MCF 10A (cell line): ENCODE measurements at regions of chr4 and their contacts with region 1.

Region 1: DNA sequence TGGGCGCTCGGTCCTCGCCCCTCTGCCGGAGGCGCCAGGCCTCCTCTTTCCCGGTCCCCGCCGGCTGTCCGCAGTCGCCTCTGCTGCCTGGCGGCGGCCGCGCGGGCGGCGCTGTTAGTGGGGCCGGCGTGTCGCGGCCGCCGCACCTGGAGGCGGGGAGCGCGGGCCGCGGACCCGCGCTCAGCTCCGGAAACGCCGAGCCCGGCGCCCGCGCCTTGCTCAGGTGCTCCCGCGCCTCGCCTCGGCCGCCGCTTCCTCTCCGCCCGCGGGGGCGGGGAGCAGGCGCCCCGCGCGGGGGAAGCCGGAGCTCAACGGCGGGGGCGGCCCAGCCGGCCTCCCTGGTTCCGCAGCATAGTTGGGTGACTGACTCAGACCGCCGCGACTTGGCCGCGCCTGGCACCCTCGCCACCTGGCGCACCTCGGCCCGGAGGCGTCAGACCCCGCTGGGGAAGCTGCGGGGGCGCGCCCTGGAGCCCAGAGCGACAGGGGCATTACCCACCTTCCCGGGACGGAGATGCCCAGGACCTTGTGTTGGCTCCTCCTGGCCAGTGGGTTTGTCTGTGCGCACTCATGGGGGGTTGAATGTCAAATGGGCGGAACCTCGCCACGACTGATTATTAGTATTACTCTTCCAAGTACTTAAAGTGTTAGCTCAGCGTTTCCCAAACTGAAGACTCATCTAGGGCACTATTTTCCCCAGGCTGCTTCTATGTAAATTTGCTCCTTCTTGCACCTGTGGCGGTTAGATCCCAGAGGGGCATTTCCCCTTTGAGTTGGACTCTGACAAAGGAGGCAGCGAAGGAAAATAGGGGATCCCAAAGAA is at the start of gene ARAP2:
- DNase-seq: peak; percentile 62
- H3K4me3 Mint-ChIP-seq: peak within 1 kb of the TSS; percentile 90
- H3K27ac Mint-ChIP-seq: peak within 1 kb of the TSS; percentile 92
- H3K4me1 Mint-ChIP-seq: peaks cover 16% of the 10 kb centered on the region
- H3K27me3 Mint-ChIP-seq: no peaks in the 10 kb centered on the region
- CTCF ChIP-seq: no peak
- total RNA-seq, gene ARAP2: 10.9 and 12.0 TPM in 2 replicates

Region 2: GRCh38 chr4:35365186-35365585 is 879.3 kb before region 1 on chr4:
- CTCF ChIA-PET with region 1: no interaction called
- POLR2A ChIA-PET with region 1: no interaction called
- intact Hi-C with region 1: no loop called
- DNase-seq: no peak
- H3K4me3 Mint-ChIP-seq: no peak overlapping the region
- H3K27ac Mint-ChIP-seq: no peak overlapping the region
- H3K4me1 Mint-ChIP-seq: no peaks in the 10 kb centered on the region
- H3K27me3 Mint-ChIP-seq: no peaks in the 10 kb centered on the region
- CTCF ChIP-seq: no peak

Region 3: GRCh38 chr4:36224972-36225903 is 19.2 kb before region 1 on chr4:
- CTCF ChIA-PET with region 1: interaction called, 4 read pairs
- POLR2A ChIA-PET with region 1: interaction called, 68 read pairs
- intact Hi-C with region 1: no loop called
- DNase-seq: no peak
- H3K4me3 Mint-ChIP-seq: no peak overlapping the region
- H3K27ac Mint-ChIP-seq: no peak overlapping the region
- H3K4me1 Mint-ChIP-seq: peaks cover 15% of the 10 kb centered on the region
- H3K27me3 Mint-ChIP-seq: no peaks in the 10 kb centered on the region
- CTCF ChIP-seq: no peak

Region 4: DNA sequence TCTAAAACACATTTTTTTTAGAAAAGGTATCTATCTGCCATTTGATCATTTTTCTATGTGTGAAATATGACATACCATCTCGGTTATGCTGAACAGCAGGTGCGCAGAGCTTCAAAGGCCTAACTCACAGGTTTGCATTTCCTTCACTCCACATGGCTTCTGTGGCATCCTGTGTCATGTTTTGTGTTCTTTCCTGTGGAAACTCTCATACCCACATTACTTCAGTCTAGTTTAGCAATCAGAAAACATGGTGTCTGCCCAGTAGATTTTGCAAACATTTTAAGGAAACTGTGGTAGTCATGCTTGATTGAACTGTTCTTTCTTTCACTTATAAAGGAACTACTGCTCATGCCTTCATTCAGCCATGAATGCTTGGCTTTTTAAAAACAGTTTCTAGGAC is 11.1 kb after region 1 on chr4:
- CTCF ChIA-PET with region 1: interaction called, 4 read pairs
- POLR2A ChIA-PET with region 1: interaction called, 13 read pairs
- intact Hi-C with region 1: no loop called
- DNase-seq: no peak
- H3K4me3 Mint-ChIP-seq: no peak overlapping the region
- H3K27ac Mint-ChIP-seq: no peak overlapping the region
- H3K4me1 Mint-ChIP-seq: no peaks in the 10 kb centered on the region
- H3K27me3 Mint-ChIP-seq: no peaks in the 10 kb centered on the region
- CTCF ChIP-seq: no peak

Region 5: DNA sequence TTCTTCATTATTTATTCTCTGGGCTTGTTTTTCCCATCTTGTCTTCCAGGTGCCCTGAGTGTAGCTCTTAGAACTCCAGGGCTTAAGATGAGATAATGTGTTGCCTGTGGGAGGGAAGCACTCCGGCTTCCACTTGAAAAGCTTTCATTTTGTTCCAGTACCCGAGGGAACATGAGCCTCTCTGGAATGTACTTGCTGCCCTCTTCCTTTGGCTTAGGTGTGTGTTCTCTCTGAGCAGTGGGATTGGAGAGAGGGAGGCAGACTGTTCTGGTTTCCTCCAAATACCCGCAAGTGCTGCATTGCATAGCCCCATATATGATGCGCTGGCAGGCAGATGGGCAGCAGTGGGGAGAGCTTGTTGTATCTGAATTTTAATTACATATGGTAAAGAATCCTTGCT is 36.1 kb after region 1 on chr4:
- CTCF ChIA-PET with region 1: interaction called, 18 read pairs
- POLR2A ChIA-PET with region 1: interaction called, 38 read pairs
- intact Hi-C with region 1: no loop called
- DNase-seq: peak; percentile 32
- H3K4me3 Mint-ChIP-seq: peak overlapping the region; percentile 45
- H3K27ac Mint-ChIP-seq: peak overlapping the region; percentile 54
- H3K4me1 Mint-ChIP-seq: peaks cover 36% of the 10 kb centered on the region
- H3K27me3 Mint-ChIP-seq: no peaks in the 10 kb centered on the region
- CTCF ChIP-seq: no peak

Region 6: GRCh38 chr4:36292556-36293188 is 48.2 kb after region 1 on chr4:
- CTCF ChIA-PET with region 1: interaction called, 3 read pairs
- POLR2A ChIA-PET with region 1: interaction called, 23 read pairs
- intact Hi-C with region 1: loop called (anchors 1 kb)
- DNase-seq: peak; percentile 67
- H3K4me3 Mint-ChIP-seq: peak overlapping the region; percentile 30
- H3K27ac Mint-ChIP-seq: peak overlapping the region; percentile 24
- H3K4me1 Mint-ChIP-seq: peaks cover 11% of the 10 kb centered on the region
- H3K27me3 Mint-ChIP-seq: no peaks in the 10 kb centered on the region
- CTCF ChIP-seq: no peak

Region 7: DNA sequence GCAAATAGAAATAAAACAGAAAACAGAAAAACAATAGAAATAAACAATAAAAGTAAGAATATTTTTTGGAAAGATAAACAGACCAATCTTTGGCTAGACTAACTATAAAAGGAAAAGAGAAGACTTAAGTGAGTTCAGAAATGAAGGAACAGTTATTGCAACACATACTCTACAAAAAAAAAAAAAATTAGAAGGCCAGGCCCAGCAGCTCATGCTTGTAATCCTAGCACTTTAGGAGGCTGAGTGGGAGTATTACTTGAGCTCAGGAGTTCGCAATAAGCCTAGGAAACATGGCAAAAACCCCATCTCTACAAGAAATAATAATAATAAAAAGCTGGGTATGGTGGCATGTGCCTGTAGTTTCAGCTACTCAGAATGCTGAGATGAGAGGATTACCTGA is 373.6 kb after region 1 on chr4:
- CTCF ChIA-PET with region 1: no interaction called
- POLR2A ChIA-PET with region 1: no interaction called
- intact Hi-C with region 1: no loop called
- DNase-seq: peak; percentile 1
- H3K4me3 Mint-ChIP-seq: no peak overlapping the region
- H3K27ac Mint-ChIP-seq: no peak overlapping the region
- H3K4me1 Mint-ChIP-seq: peaks cover 12% of the 10 kb centered on the region
- H3K27me3 Mint-ChIP-seq: no peaks in the 10 kb centered on the region
- CTCF ChIP-seq: no peak

Region 8: DNA sequence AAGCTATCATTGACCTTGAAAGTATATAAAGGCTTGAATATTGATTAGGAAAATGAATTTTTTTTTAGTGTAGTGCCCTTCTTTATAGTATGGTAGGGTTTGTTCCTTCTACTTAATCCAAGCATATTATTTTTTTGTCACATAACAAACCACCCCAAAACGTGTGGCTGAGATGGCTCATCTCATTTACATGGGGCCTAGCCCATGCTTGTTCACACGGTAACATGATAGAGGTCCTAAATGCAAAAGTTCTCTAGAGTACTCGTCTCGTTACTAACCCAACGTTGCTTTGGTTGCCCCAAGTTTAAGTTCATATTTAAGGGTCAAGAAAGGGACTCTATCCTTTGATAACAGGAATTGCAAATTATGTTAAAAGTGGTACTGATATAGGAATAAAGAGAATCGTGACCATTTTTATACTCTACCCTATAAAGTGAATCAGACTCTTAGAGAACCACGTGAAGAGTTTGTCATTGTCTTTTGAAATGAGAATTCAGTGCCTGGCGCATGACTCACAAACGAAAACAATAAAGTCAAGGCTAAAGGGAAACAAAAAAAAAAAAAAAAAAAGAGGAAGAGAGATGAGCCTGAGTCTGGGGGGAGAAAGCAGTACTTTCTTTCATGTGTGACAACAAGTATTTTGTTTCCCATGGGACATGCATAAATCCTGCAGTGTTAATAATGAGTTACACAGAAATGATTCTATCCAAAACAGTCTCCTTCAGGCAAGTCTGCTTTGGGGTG is 597.3 kb after region 1 on chr4:
- CTCF ChIA-PET with region 1: no interaction called
- POLR2A ChIA-PET with region 1: no interaction called
- intact Hi-C with region 1: no loop called
- DNase-seq: peak; percentile 73
- H3K4me3 Mint-ChIP-seq: no peak overlapping the region
- H3K27ac Mint-ChIP-seq: peak overlapping the region; percentile 24
- H3K4me1 Mint-ChIP-seq: peaks cover 6% of the 10 kb centered on the region
- H3K27me3 Mint-ChIP-seq: no peaks in the 10 kb centered on the region
- CTCF ChIP-seq: no peak